CD4-positive, alpha-beta memory T cell (primary cell): ENCODE measurements at regions of chr2 and their contacts with region 1.

Region 1: GRCh38 chr2:121649596-121650314 is 493 bp upstream of the CLASP1 start:
- DNase-seq: peak; percentile 96 to 99 (median 98)
- H3K4me3 ChIP-seq: peak overlapping the region; percentile 88 to 97
- H3K4me3 Mint-ChIP-seq: peak overlapping the region; percentile 96 to 100 (median 99)
- H3K27ac ChIP-seq: peak overlapping the region; percentile 94
- H3K27ac Mint-ChIP-seq: peak overlapping the region; percentile 99 to 100 (median 99)
- H3K4me1 ChIP-seq: peaks cover 56% of the 10 kb centered on the region
- H3K4me1 Mint-ChIP-seq: peaks cover 50 to 93% (median 65%) of the 10 kb centered on the region in 4 donors
- H3K27me3 ChIP-seq: no peaks in the 10 kb centered on the region
- H3K27me3 Mint-ChIP-seq: peaks cover 0 to 3% of the 10 kb centered on the region in 2 donors

Region 2: DNA sequence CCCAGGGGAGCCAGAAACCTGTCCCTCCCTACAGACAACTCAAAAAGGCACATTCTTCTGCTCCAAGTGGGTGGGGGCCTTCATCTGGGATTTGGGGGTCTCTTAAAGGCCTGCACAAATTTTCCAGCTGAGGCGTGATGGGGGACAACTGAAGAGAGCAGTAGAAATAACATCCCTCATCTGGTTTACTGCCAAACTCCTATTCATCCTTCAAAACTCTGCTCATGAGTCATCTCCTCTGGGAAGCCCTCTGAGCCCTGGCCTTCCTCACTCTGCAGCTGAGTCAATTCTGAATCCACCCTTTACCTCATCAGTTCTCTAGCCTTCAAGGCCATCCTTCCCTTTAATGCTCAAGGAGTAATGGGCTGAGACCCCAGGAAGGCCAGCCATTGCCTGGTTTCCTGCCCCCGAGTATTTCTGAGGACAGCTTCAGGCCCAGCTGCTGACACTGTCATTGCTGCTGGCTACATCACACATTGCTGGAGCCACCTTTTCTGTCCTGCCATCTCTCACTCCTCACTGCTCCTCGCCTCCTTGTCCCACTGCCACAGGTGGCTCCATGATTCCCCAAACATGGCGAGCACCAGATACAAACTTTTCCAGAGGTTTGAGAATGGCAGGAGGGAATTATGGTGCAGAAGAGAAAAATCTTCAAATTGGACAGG is 946.3 kb before region 1 on chr2:
- CTCF ChIA-PET with region 1: no interaction called
- POLR2A ChIA-PET with region 1: no interaction called
- intact Hi-C with region 1: no loop called
- DNase-seq: no peak
- H3K4me3 ChIP-seq: no peak overlapping the region
- H3K4me3 Mint-ChIP-seq: no peak overlapping the region
- H3K27ac ChIP-seq: no peak overlapping the region
- H3K27ac Mint-ChIP-seq: no peak overlapping the region
- H3K4me1 ChIP-seq: no peaks in the 10 kb centered on the region
- H3K4me1 Mint-ChIP-seq: no peaks in the 10 kb centered on the region
- H3K27me3 ChIP-seq: no peaks in the 10 kb centered on the region
- H3K27me3 Mint-ChIP-seq: peaks cover 0 to 6% of the 10 kb centered on the region in 2 donors

Region 3: DNA sequence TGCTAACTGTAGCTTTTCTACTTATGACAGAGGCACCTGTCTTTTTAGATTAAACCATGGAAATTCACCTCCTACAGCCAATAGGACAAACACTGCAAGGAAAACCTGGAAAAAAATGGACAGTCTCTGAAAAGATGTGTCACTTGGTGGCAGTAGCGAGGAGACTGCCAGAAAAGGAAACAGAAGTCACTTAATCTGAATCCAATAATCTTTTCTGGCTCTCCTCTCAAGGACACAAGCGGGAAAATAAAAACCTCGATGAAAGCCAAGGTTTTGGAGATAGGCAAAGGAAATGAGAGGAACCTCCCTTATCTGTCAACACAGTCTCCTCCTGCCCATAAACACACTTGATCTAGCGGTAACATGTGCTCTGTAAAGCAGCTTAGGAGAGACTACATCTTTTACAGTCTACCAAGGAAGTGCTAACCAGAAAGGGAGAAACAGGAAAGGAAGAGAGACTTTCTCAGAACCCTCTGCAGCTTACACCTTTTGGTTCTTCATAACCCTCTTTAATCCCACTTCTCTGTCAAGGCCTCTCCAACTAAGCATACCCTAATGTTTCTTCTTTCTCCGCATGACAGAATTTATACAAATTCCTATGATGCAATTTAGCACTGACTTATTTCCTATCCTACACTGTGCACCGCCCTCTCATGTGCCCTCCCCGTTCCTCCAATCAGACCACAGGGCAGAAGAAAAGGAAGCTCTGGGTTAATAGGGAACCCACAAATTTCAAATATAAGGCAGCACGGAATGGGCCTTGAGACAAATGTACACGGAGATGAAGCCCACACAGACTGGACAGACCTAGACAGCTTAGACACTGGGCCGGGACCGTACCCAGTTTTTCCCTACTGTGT is 53.3 kb before region 1 on chr2:
- CTCF ChIA-PET with region 1: no interaction called
- POLR2A ChIA-PET with region 1: interaction called, 8 read pairs
- intact Hi-C with region 1: loop called (anchors 5 kb)
- DNase-seq: no peak
- H3K4me3 ChIP-seq: no peak overlapping the region
- H3K4me3 Mint-ChIP-seq: peak overlapping the region; percentile 25 to 74 (median 48)
- H3K27ac ChIP-seq: peak overlapping the region; percentile 4
- H3K27ac Mint-ChIP-seq: peak overlapping the region; percentile 58 to 91 (median 74)
- H3K4me1 ChIP-seq: peaks cover 35% of the 10 kb centered on the region
- H3K4me1 Mint-ChIP-seq: peaks cover 36 to 63% (median 51%) of the 10 kb centered on the region in 4 donors
- H3K27me3 ChIP-seq: no peaks in the 10 kb centered on the region
- H3K27me3 Mint-ChIP-seq: no peaks in the 10 kb centered on the region

Region 4: DNA sequence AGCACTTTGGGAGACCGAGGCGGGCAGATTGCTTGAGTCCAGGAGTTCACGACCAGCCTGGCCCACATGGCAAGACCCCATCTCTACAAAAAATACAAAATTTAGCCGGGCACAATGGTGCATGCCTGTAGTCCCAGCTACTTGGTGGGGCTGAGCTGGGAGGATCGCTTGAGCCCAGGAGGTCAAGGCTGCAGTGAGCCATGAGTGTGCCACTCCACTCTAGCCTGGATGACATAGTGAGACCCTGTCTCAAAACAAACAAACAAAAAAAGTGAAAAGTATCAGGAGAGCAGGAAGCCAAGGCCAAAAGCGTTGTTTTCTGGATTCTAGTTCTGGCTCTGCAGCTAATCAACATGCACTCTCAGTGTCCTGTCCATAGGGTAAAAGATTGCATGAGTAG is 10.2 kb after region 1 on chr2:
- CTCF ChIA-PET with region 1: no interaction called
- POLR2A ChIA-PET with region 1: interaction called, 10 read pairs
- intact Hi-C with region 1: no loop called
- DNase-seq: no peak
- H3K4me3 ChIP-seq: no peak overlapping the region
- H3K4me3 Mint-ChIP-seq: no peak overlapping the region
- H3K27ac ChIP-seq: no peak overlapping the region
- H3K27ac Mint-ChIP-seq: peak overlapping the region in 2 of 7 donors; percentile 52 to 72
- H3K4me1 ChIP-seq: no peaks in the 10 kb centered on the region
- H3K4me1 Mint-ChIP-seq: peaks cover 2 to 20% (median 11%) of the 10 kb centered on the region in 4 donors
- H3K27me3 ChIP-seq: no peaks in the 10 kb centered on the region
- H3K27me3 Mint-ChIP-seq: no peaks in the 10 kb centered on the region

Region 5: DNA sequence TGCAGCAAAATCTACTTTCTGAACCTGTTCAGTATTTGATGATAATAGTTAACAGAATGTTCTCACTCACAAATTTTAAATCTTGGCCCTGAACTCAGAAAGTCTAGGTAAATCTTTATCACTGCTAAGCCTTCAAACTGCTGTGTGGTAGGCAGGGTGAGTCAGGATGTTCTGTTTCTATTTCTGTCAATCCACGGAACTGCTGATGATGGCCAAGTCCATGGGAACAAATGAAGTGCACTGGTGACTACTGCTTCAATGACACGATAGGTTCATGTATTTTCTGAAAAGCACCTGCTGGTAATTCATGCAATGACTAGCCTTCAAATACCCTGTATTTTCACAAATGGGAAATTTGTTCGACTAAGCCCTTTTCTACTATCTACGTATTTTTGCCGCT is 72.7 kb after region 1 on chr2:
- CTCF ChIA-PET with region 1: interaction called, 3 read pairs
- POLR2A ChIA-PET with region 1: interaction called, 8 read pairs
- intact Hi-C with region 1: loop called (anchors 1 kb)
- DNase-seq: no peak
- H3K4me3 ChIP-seq: no peak overlapping the region
- H3K4me3 Mint-ChIP-seq: no peak overlapping the region
- H3K27ac ChIP-seq: no peak overlapping the region
- H3K27ac Mint-ChIP-seq: peak overlapping the region in 1 of 7 donors; percentile 11
- H3K4me1 ChIP-seq: no peaks in the 10 kb centered on the region
- H3K4me1 Mint-ChIP-seq: peaks cover 4 to 17% (median 6%) of the 10 kb centered on the region in 4 donors
- H3K27me3 ChIP-seq: no peaks in the 10 kb centered on the region
- H3K27me3 Mint-ChIP-seq: no peaks in the 10 kb centered on the region

Region 6: GRCh38 chr2:121755236-121756111 is 105.7 kb after region 1 on chr2 and contains the start of gene TSN:
- CTCF ChIA-PET with region 1: no interaction called
- POLR2A ChIA-PET with region 1: interaction called, 17 read pairs
- intact Hi-C with region 1: loop called (anchors 1 kb)
- DNase-seq: peak; percentile 96 to 98 (median 97)
- H3K4me3 ChIP-seq: peak within 1 kb of the TSS; percentile 97 to 98
- H3K4me3 Mint-ChIP-seq: peak within 1 kb of the TSS; percentile 85 to 99 (median 93)
- H3K27ac ChIP-seq: peak within 1 kb of the TSS; percentile 75
- H3K27ac Mint-ChIP-seq: peak within 1 kb of the TSS; percentile 79 to 99 (median 96)
- H3K4me1 ChIP-seq: peaks cover 24% of the 10 kb centered on the region
- H3K4me1 Mint-ChIP-seq: peaks cover 18 to 42% (median 26%) of the 10 kb centered on the region in 4 donors
- H3K27me3 ChIP-seq: no peaks in the 10 kb centered on the region
- H3K27me3 Mint-ChIP-seq: no peaks in the 10 kb centered on the region
- total RNA-seq, gene TSN: 52.4 to 54.0 TPM